ENCODE measurements at regions of chr14 and their contacts with region 1.

Region 1: DNA sequence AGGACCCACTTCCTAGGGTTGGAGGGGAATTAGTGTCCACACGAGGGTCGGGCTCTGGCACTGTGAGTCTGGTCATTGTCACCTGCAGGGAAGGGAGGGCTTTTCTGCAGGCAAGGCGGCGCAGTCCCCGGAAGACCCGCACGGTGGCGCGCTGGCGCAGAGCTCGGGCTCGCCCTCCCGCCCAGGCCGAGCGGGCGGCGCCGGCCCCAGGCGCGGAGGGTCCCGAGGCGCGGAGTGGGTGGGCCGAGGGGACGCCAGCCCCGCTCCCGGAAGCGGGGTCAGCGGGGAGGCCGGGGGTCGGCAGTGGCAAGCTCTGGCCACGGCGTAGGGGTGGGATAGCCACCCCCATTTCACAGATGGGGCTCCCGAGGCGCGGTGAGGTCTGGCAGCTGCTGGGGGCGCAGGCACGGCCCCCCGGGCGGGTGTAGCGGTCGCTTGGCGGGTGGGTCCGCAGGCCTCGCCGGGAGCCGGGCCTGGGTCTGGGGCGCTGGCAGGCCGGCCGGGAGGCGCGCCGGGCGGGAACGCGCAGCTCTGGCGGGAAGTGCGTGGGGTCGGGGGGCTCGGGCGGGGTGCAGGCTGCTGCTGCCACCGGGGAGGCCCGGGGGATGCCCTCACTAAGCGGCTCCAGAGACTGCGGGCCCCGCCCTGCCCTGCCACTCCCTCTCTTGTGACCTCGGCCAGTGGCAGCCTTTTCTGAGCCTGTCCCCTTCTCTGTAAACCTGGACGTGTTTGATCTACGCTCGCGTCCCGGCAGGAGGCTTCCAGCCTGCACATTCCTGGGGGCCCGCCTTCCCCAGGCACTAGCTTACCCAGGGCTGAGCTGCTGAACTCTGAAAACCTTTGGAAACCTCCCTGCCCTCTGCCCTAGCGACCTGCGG is 46.1 kb downstream of the CYP46A1 start:
- DNase-seq: peak; percentile 65 to 77
- ATAC-seq: peak; percentile 62 to 79
- H3K4me3 ChIP-seq: peak overlapping the region; percentile 88
- H3K27ac ChIP-seq: peak overlapping the region; percentile 86 to 89
- H3K4me1 ChIP-seq: peaks cover 7% of the 10 kb centered on the region; the same call in 2 of the 3 replicates
- CTCF ChIP-seq: peak; percentile 91
- EP300 ChIP-seq: no peak
- POLR2A ChIP-seq: no peak; the same call in 1 of the 2 replicates
- RAD21 ChIP-seq: peak; percentile 81 to 92

Region 2: DNA sequence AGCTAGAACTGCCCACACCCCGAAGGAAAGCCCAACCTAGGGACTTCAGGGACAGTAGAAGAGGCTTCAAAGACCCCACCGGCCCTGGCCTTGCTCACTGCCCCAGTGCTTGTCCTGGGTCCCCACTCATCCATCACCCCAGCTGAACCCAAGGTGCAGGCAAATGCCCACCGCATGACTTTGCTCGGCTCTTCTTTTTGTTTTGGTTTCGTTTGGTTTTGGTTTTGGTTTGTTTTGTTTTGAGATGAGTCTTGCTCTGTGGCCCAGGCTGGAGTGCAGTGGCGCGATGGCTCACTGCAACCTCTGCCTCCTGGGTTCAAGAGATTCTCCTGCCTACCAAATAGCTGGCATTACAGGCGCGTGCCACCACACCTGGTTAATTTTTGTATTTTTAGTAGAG is 135.2 kb before region 1 on chr14:
- CTCF ChIA-PET with region 1: no interaction called
- POLR2A ChIA-PET with region 1: no interaction called
- DNase-seq: no peak
- ATAC-seq: no peak
- H3K4me3 ChIP-seq: no peak overlapping the region
- H3K27ac ChIP-seq: no peak overlapping the region
- H3K4me1 ChIP-seq: peaks cover 70% of the 10 kb centered on the region
- CTCF ChIP-seq: no peak
- EP300 ChIP-seq: no peak
- POLR2A ChIP-seq: no peak
- RAD21 ChIP-seq: no peak

Region 3: DNA sequence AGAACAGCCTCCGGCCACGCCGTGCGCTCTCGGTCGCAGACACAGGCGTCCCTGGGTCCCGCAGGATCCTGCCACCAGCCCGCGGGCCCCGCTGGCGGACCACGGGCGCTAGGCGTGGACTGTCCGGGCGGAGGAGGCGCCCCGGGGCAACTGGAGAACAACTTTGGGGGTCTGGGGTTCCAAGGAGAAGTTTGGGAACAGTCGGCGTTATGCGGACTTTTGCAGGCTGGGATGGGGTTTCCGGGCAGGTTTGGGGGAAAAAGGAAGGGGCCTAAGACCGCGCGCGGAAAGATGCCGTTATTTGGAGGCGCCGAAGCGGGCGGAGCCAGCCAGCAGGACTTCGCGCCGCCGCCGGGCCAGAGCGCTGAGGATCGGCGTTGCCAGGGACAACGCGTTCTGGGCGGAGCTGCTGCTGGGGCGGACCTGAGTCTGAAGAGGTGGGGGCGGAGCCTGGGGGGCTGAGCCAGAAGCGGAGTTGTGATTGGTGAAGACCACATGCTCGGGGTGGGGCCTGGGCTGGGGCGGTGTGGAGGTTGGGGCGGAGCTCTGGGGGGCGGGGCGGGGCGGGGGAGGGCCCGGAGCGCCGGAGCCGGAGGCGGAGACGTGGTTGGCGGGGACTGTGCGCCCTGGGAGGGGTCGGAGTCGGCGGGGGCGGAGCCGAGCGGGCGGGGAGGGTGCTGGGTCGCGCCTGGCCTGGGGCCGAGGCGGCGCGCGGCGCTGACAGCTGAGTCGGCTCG is 46.4 kb before region 1 on chr14 and contains the start of gene CYP46A1:
- CTCF ChIA-PET with region 1: interaction called, 36 read pairs
- POLR2A ChIA-PET with region 1: interaction called, 3 read pairs
- DNase-seq: peak; percentile 97 to 99
- ATAC-seq: peak; percentile 79 to 89
- H3K4me3 ChIP-seq: peak within 1 kb of the TSS; percentile 68
- H3K27ac ChIP-seq: peak within 1 kb of the TSS; percentile 77 to 90
- H3K4me1 ChIP-seq: peaks cover 4% of the 10 kb centered on the region
- CTCF ChIP-seq: no peak
- EP300 ChIP-seq: no peak
- POLR2A ChIP-seq: peak; percentile 41
- RAD21 ChIP-seq: no peak
- polyA plus RNA-seq, gene CYP46A1: 0.06 and 0.09 TPM in 2 replicates

Region 4: DNA sequence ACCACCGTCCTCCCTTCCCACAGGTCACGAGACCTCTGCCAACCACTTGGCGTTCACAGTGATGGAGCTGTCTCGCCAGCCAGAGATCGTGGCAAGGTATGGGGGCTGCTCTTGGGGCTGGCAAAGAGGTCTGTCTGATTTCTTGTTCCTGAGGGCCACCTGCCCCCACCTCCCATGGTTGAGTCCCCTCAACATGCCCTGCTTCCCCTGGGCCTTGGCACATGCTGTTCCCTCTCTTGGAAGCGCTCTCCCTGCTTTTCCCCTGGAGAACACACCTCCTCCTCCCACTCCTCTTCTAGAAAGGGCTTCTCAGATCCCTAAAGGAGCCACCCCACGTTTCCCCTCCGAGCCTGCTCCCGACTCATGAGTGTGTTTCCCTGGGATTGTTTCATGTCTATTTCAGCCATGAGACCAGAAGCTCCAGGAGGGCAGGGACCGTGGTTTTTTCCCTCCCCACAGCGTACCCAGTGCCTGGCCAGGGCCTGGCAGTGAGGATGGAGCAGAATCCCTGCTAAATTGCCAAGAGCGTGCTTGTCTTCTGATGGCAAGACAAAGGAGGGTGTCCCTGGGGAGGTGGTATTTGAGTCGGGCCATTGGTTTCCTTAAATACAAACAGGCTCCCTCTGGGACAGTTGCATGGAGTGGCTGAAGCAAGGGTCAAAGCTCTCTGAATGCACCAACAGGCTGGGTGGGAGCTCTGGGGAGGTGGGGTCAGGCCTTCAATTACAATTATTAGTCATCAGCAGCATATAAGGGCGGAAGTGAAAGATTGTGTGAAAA is 12.0 kb before region 1 on chr14:
- CTCF ChIA-PET with region 1: interaction called, 23 read pairs
- POLR2A ChIA-PET with region 1: no interaction called
- DNase-seq: no peak
- ATAC-seq: no peak
- H3K4me3 ChIP-seq: no peak overlapping the region
- H3K27ac ChIP-seq: no peak overlapping the region
- H3K4me1 ChIP-seq: no peaks in the 10 kb centered on the region
- CTCF ChIP-seq: no peak
- EP300 ChIP-seq: no peak
- POLR2A ChIP-seq: no peak
- RAD21 ChIP-seq: no peak

Region 5: DNA sequence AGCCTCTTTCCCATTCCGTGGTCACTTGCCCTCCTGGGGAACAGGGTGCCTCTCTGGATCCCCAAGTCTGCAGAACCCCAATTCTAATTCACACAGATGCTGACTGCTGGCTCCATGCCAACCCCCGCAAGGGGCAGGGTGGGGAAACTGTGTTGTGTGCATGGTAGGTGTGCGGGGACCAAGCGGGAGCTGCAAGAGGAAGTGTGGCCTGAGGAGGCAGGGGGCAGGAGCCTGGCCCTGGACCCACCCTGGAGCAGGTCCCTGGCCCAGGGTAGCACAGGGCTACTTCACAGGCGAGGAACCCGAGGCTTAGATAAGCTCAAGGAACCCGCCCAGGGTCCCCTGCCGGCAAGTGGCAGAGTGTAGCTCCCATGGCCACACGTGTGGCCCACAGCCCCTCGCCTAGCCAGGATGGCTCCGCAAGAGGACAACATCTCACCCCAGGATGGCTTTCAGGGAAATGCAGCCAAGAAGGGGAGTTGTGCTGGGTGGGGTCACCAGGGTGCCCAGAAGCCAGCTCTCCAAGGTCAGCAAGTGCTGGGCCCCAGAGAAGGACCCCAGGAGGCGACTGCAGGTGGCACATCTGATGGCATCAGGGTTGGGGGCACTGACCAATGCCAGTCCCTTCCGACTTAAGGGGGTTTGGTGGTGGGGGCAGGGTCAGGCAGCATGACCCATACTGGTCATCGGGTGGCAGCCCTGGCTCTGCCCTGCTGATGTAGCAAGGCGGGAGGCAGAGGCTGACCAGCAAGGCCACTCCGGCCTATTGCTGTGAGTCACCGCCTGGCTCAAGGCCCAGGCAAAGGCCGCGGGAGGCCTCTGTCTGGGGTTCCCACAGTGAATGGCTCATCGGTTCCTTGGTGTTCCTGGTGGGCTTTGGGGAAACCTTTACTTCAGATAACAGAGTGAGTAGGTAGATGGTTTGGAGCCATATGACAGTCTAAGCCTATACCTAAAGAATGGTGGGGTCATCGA is 25.7 kb after region 1 on chr14:
- CTCF ChIA-PET with region 1: interaction called, 263 read pairs
- POLR2A ChIA-PET with region 1: no interaction called
- DNase-seq: peak; percentile 73 to 82
- ATAC-seq: peak; percentile 79 to 85
- H3K4me3 ChIP-seq: no peak overlapping the region
- H3K27ac ChIP-seq: peak overlapping the region; percentile 83 to 92
- H3K4me1 ChIP-seq: peaks cover 81% of the 10 kb centered on the region
- CTCF ChIP-seq: no peak
- EP300 ChIP-seq: peak in 1 of 2 experiments; percentile 51; a peak in 2 of 5 replicates
- POLR2A ChIP-seq: no peak
- RAD21 ChIP-seq: no peak

Region 6: DNA sequence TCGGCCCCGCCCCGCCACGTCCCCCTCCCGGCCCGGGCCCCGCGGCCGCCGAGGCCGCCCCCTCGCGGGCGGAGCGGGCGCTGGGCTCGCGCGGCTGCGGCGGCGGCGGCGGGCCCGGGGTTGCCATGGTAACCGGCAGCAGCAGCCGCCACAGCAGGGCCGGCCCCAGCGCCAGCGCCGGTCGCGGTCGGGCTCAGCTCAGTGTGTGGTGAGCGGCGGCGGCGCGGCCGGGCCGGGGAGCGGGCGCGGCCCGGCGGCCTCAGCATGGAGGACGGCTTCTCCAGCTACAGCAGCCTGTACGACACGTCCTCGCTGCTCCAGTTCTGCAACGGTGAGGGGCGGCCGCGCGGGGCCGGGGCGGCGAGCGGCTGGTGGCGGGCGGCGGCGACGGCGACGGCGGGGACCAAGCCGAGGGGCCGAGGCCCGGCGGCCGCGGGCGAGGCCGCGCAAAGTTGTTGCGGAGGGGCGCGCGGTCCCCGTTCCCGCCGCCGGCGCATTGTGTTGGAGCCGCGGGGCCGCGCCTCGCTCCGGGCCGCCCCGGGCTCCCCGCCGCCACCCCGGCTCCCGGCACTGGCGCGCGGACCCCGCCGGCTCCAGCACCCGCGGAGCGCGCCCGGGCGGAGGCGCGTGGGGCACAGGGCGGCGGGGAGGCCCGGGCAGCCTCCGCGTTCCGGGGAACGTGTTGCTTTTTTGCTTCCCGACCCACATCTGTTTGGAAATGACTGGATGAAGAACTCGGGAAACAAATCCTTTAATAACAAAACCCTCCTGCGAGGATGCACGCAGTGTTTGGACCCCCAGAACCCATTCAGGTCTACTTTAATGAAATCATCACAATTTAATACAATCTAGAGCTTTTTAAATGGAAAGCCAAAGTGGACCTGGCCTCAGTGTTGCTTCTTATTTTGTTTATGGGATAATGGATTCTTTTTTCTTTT is 63.3 kb after region 1 on chr14 and contains the start of gene EML1:
- CTCF ChIA-PET with region 1: interaction called, 68 read pairs
- POLR2A ChIA-PET with region 1: interaction called, 7 read pairs
- DNase-seq: peak; percentile 80 to 88
- ATAC-seq: peak; percentile 94 to 95
- H3K4me3 ChIP-seq: peak within 1 kb of the TSS; percentile 76
- H3K27ac ChIP-seq: peak within 1 kb of the TSS; percentile 78 to 98
- H3K4me1 ChIP-seq: peaks cover 20% of the 10 kb centered on the region
- CTCF ChIP-seq: peak; percentile 55
- EP300 ChIP-seq: no peak
- POLR2A ChIP-seq: peak; percentile 58
- RAD21 ChIP-seq: no peak
- polyA plus RNA-seq, gene EML1: 30.8 and 37.7 TPM in 2 replicates

Region 7: DNA sequence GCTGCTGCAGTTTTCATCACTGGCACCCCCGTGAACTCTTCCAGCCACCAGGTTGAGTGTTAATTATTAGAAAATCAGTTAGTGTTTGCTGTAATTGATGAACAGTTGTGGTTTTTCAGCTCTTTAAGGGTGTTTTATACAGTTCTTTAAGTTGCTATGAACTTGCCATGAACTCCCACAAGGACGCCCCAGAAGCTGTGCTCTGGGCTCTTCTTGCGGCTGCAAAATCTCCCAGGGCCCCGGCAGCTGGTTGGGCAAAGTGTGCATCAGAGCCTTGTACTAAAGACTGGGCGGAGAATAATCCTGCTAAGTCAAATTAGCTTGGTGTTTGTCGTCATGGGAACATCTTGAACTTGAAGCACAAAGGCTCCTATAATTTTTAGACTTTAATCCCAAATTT is 145.2 kb after region 1 on chr14:
- CTCF ChIA-PET with region 1: interaction called, 260 read pairs
- POLR2A ChIA-PET with region 1: no interaction called
- DNase-seq: no peak
- ATAC-seq: no peak
- H3K4me3 ChIP-seq: no peak overlapping the region
- H3K27ac ChIP-seq: no peak overlapping the region
- H3K4me1 ChIP-seq: peaks cover 4% of the 10 kb centered on the region; the same call in 1 of the 3 replicates
- CTCF ChIP-seq: no peak
- EP300 ChIP-seq: no peak
- POLR2A ChIP-seq: no peak
- RAD21 ChIP-seq: no peak

Region 8: GRCh38 chr14:99899578-99900178 is 169.4 kb after region 1 on chr14:
- CTCF ChIA-PET with region 1: interaction called, 21 read pairs
- POLR2A ChIA-PET with region 1: no interaction called
- DNase-seq: peak in 1 of 2 experiments; percentile 15
- ATAC-seq: peak in 1 of 2 experiments; percentile 49; a peak in 2 of 6 replicates
- H3K4me3 ChIP-seq: no peak overlapping the region
- H3K27ac ChIP-seq: no peak overlapping the region
- H3K4me1 ChIP-seq: no peaks in the 10 kb centered on the region
- CTCF ChIP-seq: peak; percentile 50
- EP300 ChIP-seq: no peak
- POLR2A ChIP-seq: no peak
- RAD21 ChIP-seq: peak; percentile 23 to 28; a peak in 2 of 5 replicates

Measured in A549 (cell line).